ENCODE measurements at regions of chr1 and their contacts with region 1.

Region 1: DNA sequence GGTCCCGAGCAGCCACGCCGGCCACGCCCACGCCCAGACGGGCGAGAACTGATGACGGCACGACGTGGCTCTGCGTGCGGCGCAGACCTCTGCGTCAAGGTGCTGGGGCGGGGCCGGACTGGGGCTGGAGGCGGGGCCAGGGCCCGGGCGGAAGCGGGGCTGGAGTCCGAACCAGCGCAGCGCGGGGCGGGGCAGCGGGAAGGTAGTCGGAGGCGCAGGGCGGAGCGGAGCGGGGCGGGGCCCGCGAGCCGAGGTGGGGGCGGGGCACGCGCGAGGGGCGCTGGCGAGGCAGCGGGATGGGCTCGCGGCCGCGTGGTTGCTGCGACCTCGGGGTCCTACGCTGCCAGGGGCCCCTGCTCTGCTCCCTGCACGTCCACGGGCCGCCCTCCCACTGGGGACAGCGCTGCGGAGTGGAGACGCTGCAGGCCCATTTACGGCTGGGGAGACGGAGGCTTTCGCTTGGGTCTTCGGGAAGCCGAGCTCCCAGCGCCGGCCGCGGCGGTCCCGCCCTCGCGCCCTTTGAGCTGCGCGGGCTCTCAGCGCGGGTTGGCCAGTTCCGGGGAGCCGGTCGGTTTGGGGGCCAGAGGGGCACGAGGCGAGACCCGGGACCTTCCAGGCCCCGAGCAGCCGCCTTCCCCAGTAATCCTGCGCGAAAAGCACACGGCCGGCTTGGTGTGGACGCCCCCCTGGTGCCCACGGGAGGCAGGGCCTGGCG is at the start of gene PEX10:
- DNase-seq: peak; percentile 98
- H3K4me3 ChIP-seq: peak within 1 kb of the TSS; percentile 65 to 97 (median 84)
- H3K27ac ChIP-seq: peak within 1 kb of the TSS; percentile 86 to 93 (median 90)
- H3K4me1 ChIP-seq: peaks cover 0 to 31% (median 26%) of the 10 kb centered on the region in 4 donors
- H3K27me3 ChIP-seq: peaks cover 4 to 23% (median 14%) of the 10 kb centered on the region in 3 donors
- CTCF ChIP-seq: no peak
- EP300 ChIP-seq: peak in 1 of 4 donors; percentile 14
- POLR2A ChIP-seq: peak in 1 of 2 donors; percentile 13
- total RNA-seq, gene PEX10: 12.8 to 17.0 (median 15.0) TPM

Region 2: DNA sequence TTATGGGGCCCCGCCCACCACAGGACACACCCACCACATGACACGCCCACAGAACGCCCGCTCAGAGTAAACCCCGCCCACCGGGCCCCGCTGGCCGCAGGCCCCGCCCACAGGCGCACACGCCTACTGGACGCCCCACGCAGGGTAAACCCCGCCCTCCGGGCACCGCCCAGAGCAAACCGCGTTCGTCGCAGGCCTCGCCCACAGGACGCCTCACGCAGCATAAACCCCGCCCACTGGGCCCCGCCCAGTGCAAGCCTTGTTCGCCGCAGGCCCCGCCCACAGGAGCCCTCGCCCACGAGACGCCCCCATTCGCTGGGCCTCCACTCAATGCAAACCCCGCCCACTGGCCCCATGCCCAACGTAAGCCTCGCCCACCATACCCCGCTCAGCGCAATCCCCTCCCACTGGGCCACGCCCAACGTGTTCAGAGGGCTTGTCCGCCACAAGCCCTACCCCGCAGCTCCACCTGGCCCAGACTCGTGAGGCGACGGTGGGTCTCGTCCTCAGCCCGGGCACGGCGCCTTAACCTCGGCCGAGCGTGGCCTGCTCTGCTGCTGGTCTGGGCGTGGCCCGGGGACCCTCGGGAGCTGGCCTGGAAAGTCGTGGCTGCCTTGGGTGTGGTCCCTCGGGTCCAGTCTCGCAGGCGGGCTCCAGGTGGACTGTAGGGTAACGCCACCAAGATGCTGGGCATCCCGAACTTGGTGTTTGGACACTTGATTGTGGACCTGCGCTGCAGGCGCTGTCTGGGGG is 493.2 kb before region 1 on chr1:
- intact Hi-C with region 1: loop called (anchors 10 kb)
- DNase-seq: peak; percentile 99
- H3K4me3 ChIP-seq: peak overlapping the region in 3 of 4 donors; percentile 49 to 56 (median 56)
- H3K27ac ChIP-seq: peak overlapping the region; percentile 57 to 77 (median 68)
- H3K4me1 ChIP-seq: peaks cover 0 to 14% (median 11%) of the 10 kb centered on the region in 4 donors
- H3K27me3 ChIP-seq: no peaks in the 10 kb centered on the region
- CTCF ChIP-seq: no peak
- EP300 ChIP-seq: no peak
- POLR2A ChIP-seq: no peak

Region 3: GRCh38 chr1:2391041-2391930 is 21.4 kb before region 1 on chr1 and contains the starts of genes MORN1 and RER1:
- intact Hi-C with region 1: loop called (anchors 1 kb)
- DNase-seq: peak; percentile 99
- H3K4me3 ChIP-seq: peak within 1 kb of the TSS; percentile 71 to 100 (median 85)
- H3K27ac ChIP-seq: peak within 1 kb of the TSS; percentile 83 to 96 (median 92)
- H3K4me1 ChIP-seq: peaks cover 0 to 45% (median 40%) of the 10 kb centered on the region in 4 donors
- H3K27me3 ChIP-seq: no peaks in the 10 kb centered on the region
- CTCF ChIP-seq: no peak
- EP300 ChIP-seq: peak in 1 of 4 donors; percentile 69
- POLR2A ChIP-seq: peak; percentile 16 to 41
- total RNA-seq, gene MORN1: 6.2 to 9.1 (median 6.7) TPM
- total RNA-seq, gene RER1: 49.0 to 56.2 (median 50.7) TPM

Region 4: DNA sequence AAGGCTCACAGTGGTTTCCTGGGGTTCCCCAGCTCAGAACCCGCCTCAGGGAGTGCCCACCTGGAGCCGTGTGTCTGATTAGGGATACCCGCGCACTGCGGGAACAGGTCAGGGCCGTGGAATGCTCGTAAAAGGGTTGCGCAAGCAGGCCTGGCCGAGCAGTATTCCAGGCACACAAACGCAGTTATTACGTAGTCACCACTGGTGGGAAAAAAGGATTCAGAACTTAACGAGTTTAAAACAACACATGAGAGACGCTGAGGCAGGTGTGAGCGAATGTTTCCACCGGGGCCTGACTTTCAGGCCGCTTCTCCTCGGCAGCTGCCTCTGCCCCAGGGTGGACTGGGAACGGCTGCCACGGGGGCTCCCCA is 81.6 kb after region 1 on chr1:
- intact Hi-C with region 1: no loop called
- DNase-seq: peak; percentile 78
- H3K4me3 ChIP-seq: no peak overlapping the region
- H3K27ac ChIP-seq: no peak overlapping the region
- H3K4me1 ChIP-seq: peaks cover 0 to 11% (median 4%) of the 10 kb centered on the region in 4 donors
- H3K27me3 ChIP-seq: peaks cover 0 to 50% (median 3%) of the 10 kb centered on the region in 3 donors
- CTCF ChIP-seq: no peak
- EP300 ChIP-seq: peak in 1 of 4 donors; percentile 36
- POLR2A ChIP-seq: no peak

Region 5: GRCh38 chr1:2545759-2546514 is 133.3 kb after region 1 on chr1:
- intact Hi-C with region 1: loop called (anchors 1 kb)
- DNase-seq: peak; percentile 96
- H3K4me3 ChIP-seq: peak overlapping the region; percentile 36 to 52 (median 48)
- H3K27ac ChIP-seq: peak overlapping the region; percentile 79 to 94 (median 82)
- H3K4me1 ChIP-seq: peaks cover 0 to 61% (median 46%) of the 10 kb centered on the region in 4 donors
- H3K27me3 ChIP-seq: peaks cover 19 to 68% (median 53%) of the 10 kb centered on the region in 3 donors
- CTCF ChIP-seq: no peak
- EP300 ChIP-seq: no peak
- POLR2A ChIP-seq: peak in 1 of 2 donors; percentile 39

Region 6: DNA sequence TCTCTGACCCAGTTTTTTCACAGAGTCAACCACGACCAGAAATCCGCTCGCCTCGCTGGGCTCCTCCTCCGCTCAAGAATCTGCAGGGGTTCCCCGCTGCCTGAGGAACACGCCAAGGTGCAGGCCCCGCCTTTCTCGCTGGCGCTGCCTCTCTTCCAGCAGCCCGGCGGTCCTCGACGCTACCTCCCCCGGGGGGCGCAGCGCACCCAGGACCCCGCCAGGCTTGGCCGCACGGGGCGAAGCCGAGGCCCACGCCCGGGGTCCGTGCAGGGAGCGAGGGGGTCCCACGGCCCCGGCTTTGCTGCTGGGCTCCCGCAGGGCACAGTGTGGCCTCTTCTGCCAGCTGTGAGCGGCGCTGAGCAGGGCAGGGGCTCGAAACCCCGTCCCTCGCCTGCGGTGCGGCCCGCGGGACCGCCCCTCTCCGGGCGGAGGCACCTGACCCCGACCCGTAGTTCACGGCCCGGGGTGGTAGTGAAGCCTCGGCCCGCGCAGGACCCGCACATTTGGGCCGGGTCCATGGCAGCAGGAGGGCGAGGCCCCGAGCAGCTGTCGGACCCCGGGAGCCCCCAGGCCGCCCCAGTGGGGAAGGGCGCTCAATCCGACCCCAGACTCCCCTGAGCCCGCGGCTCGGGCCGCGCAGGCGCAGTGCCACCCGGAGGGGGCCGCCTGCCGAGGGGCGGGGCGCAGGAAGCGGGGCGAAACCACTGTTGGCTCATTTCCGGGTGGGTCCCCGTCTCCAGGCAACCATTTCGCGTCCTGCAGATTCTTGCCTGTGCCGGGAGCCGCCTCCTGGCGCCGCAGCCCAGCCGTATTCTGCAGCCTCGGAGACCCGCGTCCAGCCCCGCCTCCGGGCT is 230.1 kb after region 1 on chr1:
- intact Hi-C with region 1: loop called (anchors 10 kb)
- DNase-seq: peak; percentile 96
- H3K4me3 ChIP-seq: peak overlapping the region; percentile 67 to 95 (median 88)
- H3K27ac ChIP-seq: peak overlapping the region; percentile 81 to 84 (median 82)
- H3K4me1 ChIP-seq: peaks cover 0 to 26% (median 21%) of the 10 kb centered on the region in 4 donors
- H3K27me3 ChIP-seq: peaks cover 0 to 2% (median 0%) of the 10 kb centered on the region in 3 donors
- CTCF ChIP-seq: no peak
- EP300 ChIP-seq: no peak
- POLR2A ChIP-seq: peak; percentile 63 to 67

Region 7: GRCh38 chr1:3423245-3423829 is 1010.7 kb after region 1 on chr1:
- intact Hi-C with region 1: loop called (anchors 5 kb)
- DNase-seq: no peak
- H3K4me3 ChIP-seq: no peak overlapping the region
- H3K27ac ChIP-seq: peak overlapping the region in 2 of 4 donors; percentile 34 to 49
- H3K4me1 ChIP-seq: peaks cover 0 to 5% (median 2%) of the 10 kb centered on the region in 4 donors
- H3K27me3 ChIP-seq: peaks cover 3 to 61% (median 33%) of the 10 kb centered on the region in 3 donors
- CTCF ChIP-seq: no peak
- EP300 ChIP-seq: no peak
- POLR2A ChIP-seq: peak in 1 of 2 donors; percentile 17

Region 8: GRCh38 chr1:3900119-3900968 is 1487.7 kb after region 1 on chr1 and contains the start of gene C1orf174:
- intact Hi-C with region 1: loop called (anchors 5 kb)
- DNase-seq: peak; percentile 99
- H3K4me3 ChIP-seq: peak within 1 kb of the TSS; percentile 83 to 98 (median 96)
- H3K27ac ChIP-seq: peak within 1 kb of the TSS; percentile 95 to 100 (median 99)
- H3K4me1 ChIP-seq: peaks cover 0 to 24% (median 19%) of the 10 kb centered on the region in 4 donors
- H3K27me3 ChIP-seq: no peaks in the 10 kb centered on the region
- CTCF ChIP-seq: no peak
- EP300 ChIP-seq: no peak
- POLR2A ChIP-seq: peak in 1 of 2 donors; percentile 35
- total RNA-seq, gene C1orf174: 23.4 to 33.0 (median 24.5) TPM